Ascending aorta (tissue), 2 donors: ENCODE measurements at regions of chr19 and their contacts with region 1.

Region 1: DNA sequence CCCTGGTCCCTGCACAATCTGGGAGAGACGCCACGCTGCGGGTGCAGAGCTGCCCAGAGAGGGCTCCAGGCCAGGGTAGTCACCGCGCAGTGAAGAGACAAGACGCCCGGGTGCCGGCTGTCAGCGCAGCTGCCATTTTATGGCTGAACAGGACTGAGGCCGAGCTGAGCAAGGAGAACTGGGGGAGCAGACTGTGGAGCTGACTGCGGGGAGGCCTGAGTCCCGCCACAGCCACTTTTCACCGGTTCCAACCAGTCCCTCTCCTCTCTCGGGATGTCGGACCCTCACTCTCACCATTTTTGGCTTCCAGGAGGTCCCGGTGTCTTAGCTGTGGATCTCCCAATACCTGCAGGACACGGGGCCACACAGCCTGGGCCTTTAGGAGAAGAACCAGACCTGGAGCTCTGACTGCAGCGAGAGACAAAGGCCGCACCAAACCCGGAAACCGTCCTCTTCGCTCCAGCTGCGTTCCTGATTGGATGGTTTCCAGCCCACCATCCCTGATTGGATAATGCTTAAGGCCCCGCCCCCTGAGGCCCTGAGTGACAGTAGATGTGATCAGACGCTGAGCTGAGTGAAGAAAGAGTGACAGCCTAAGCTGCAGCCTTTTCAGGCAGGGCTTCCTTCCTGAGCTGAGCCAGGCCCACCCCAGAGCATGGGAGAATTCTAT is at the start of gene ZNF626:
- DNase-seq: peak; percentile 93 to 98
- H3K4me3 ChIP-seq: peak within 1 kb of the TSS; percentile 65 to 81
- H3K27ac ChIP-seq: peak within 1 kb of the TSS; percentile 72 to 82
- H3K4me1 ChIP-seq: peaks cover 0 to 14% of the 10 kb centered on the region in 2 donors
- H3K27me3 ChIP-seq: no peaks in the 10 kb centered on the region
- CTCF ChIP-seq: no peak
- total RNA-seq, gene ZNF626: 2.8 TPM

Region 2: GRCh38 chr19:20423381-20424197 is 237.7 kb before region 1 on chr19:
- intact Hi-C with region 1: loop called (anchors 5 kb)
- DNase-seq: peak; percentile 26 to 80
- H3K4me3 ChIP-seq: peak overlapping the region; percentile 63 to 71
- H3K27ac ChIP-seq: peak overlapping the region; percentile 77 to 87
- H3K4me1 ChIP-seq: peaks cover 0 to 3% of the 10 kb centered on the region in 2 donors
- H3K27me3 ChIP-seq: no peaks in the 10 kb centered on the region
- CTCF ChIP-seq: no peak

Region 3: GRCh38 chr19:20565321-20566018 is 95.8 kb before region 1 on chr19 and contains the start of gene ZNF737:
- intact Hi-C with region 1: loop called (anchors 2 kb)
- DNase-seq: peak; percentile 78 to 98
- H3K4me3 ChIP-seq: peak within 1 kb of the TSS; percentile 77 to 91
- H3K27ac ChIP-seq: peak within 1 kb of the TSS; percentile 82 to 90
- H3K4me1 ChIP-seq: peaks cover 0 to 2% of the 10 kb centered on the region in 2 donors
- H3K27me3 ChIP-seq: no peaks in the 10 kb centered on the region
- CTCF ChIP-seq: peak; percentile 29 to 51 (median 37)
- total RNA-seq, gene ZNF737: 2.4 TPM

Region 4: GRCh38 chr19:20776083-20777076 is 115.1 kb after region 1 on chr19 and contains the start of gene ZNF66:
- intact Hi-C with region 1: loop called (anchors 5 kb)
- DNase-seq: peak; percentile 88 to 98
- H3K4me3 ChIP-seq: peak within 1 kb of the TSS; percentile 56 to 75
- H3K27ac ChIP-seq: peak within 1 kb of the TSS; percentile 4 to 34
- H3K4me1 ChIP-seq: peaks cover 0 to 2% of the 10 kb centered on the region in 2 donors
- H3K27me3 ChIP-seq: no peaks in the 10 kb centered on the region
- CTCF ChIP-seq: no peak
- total RNA-seq, gene ZNF66: 0.32 TPM

Region 5: GRCh38 chr19:20858218-20858617 is 196.9 kb after region 1 on chr19:
- intact Hi-C with region 1: no loop called
- DNase-seq: no peak
- H3K4me3 ChIP-seq: no peak overlapping the region
- H3K27ac ChIP-seq: no peak overlapping the region
- H3K4me1 ChIP-seq: no peaks in the 10 kb centered on the region
- H3K27me3 ChIP-seq: no peaks in the 10 kb centered on the region
- CTCF ChIP-seq: no peak

Region 6: DNA sequence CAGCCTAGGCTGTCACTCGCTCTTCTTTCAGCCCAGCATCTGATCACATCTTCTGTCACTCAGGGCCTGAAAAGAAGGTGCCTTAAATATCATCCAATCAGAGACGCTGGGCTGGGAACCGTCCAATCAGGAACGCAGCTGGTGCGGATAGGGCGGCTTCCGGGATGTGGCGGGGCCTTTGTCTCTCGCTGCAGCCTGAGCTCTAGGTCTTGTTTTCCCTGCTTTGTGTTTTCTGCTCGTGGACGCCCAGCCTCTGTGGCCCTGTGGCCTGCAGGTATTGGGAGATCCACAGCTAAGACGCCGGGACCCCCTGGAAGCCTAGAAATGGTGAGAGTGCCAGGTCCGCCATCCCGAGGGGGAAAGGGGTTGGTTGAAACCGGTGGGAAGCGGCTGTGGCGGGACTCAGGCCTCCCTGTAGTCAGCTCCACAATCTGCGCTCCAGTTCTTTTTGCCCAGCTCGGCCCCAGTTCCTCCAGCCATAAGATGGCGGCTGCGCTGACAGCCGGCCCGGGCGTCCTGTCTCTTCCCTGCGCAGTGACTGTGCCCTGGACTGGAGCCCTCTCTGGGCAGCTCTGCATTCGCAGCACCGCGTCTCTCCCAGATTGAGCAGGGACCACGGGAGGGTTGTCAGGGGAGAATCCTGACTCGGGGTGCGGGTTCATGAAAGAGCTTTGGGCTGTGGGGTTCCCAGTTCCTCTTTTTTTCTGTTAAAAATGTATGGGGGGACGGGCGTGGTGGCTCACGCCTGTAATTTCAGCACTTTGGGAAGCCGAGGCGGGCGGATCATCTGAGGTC is 262.0 kb after region 1 on chr19 and contains the start of gene ZNF85:
- intact Hi-C with region 1: loop called (anchors 5 kb)
- DNase-seq: peak; percentile 69 to 94
- H3K4me3 ChIP-seq: peak within 1 kb of the TSS; percentile 70 to 74
- H3K27ac ChIP-seq: peak within 1 kb of the TSS; percentile 72 to 90
- H3K4me1 ChIP-seq: peaks cover 0 to 4% of the 10 kb centered on the region in 2 donors
- H3K27me3 ChIP-seq: no peaks in the 10 kb centered on the region
- CTCF ChIP-seq: no peak
- total RNA-seq, gene ZNF85: 0.96 TPM

Region 7: DNA sequence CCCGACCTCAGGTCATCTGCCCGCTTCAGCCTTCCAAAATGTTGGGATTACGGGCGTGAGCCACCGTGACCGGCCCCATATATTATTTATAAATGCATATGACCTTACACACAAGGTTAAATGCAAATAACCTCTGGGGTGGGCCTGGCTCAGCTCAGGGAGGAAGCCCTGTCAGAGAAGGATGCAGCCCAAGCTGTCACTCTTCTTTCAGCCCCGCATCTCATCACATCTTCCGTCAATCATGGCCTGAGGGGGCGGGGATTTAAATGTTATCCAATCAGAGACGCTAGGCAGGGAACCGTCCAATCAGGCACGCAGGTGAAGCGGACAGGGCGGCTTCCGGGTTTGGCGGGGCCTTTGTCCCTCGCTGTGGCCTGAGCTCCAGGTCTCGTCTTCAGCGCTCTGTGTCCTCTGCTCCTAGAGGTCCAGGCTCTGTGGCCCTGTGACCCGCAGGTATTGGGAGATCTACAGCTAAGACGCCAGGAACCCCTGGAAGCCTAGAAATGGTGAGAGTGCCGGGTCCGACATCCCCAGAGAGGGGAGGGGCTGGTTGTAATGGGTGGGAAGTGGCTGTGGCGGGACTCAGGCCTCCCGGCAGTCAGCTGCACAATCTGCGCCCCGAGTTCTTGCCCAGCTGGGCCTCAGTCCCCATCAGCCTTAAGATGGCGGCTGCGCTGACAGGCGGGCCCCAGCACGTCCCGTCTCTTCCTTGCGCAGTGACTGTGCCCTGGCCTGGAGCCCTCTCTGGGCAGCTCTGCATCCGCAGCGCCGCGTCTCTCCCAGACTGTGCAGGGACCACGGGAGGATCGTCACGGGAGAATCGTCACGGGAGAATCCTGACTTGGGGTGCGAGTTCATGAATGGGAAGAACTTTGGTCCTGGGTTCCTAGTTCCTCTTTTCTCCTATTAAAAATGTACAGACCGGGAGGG is 359.3 kb after region 1 on chr19 and contains the start of gene ZNF430:
- intact Hi-C with region 1: loop called (anchors 10 kb)
- DNase-seq: peak; percentile 84 to 98
- H3K4me3 ChIP-seq: peak within 1 kb of the TSS; percentile 93
- H3K27ac ChIP-seq: peak within 1 kb of the TSS; percentile 75 to 88
- H3K4me1 ChIP-seq: peaks cover 0 to 4% of the 10 kb centered on the region in 2 donors
- H3K27me3 ChIP-seq: no peaks in the 10 kb centered on the region
- CTCF ChIP-seq: no peak
- total RNA-seq, gene ZNF430: 5.3 TPM

Region 8: GRCh38 chr19:21141787-21142464 is 480.6 kb after region 1 on chr19 and contains the start of gene ZNF431:
- intact Hi-C with region 1: loop called (anchors 10 kb)
- DNase-seq: peak; percentile 78 to 95
- H3K4me3 ChIP-seq: peak within 1 kb of the TSS; percentile 74 to 82
- H3K27ac ChIP-seq: peak within 1 kb of the TSS; percentile 68 to 70
- H3K4me1 ChIP-seq: peaks cover 0 to 5% of the 10 kb centered on the region in 2 donors
- H3K27me3 ChIP-seq: no peaks in the 10 kb centered on the region
- CTCF ChIP-seq: no peak
- total RNA-seq, gene ZNF431: 10.2 TPM